HAP-1 (cell line): ENCODE measurements at regions of chr5 and their contacts with region 1.

Region 1: GRCh38 chr5:44774279-44774880 is 34.4 kb upstream of the MRPS30 start:
- DNase-seq: peak; percentile 27 to 67
- H3K4me3 ChIP-seq: no peak overlapping the region
- H3K4me1 ChIP-seq: peaks cover 3% of the 10 kb centered on the region; the same call in 1 of the 2 replicates
- H3K27me3 ChIP-seq: no peaks in the 10 kb centered on the region

Region 2: DNA sequence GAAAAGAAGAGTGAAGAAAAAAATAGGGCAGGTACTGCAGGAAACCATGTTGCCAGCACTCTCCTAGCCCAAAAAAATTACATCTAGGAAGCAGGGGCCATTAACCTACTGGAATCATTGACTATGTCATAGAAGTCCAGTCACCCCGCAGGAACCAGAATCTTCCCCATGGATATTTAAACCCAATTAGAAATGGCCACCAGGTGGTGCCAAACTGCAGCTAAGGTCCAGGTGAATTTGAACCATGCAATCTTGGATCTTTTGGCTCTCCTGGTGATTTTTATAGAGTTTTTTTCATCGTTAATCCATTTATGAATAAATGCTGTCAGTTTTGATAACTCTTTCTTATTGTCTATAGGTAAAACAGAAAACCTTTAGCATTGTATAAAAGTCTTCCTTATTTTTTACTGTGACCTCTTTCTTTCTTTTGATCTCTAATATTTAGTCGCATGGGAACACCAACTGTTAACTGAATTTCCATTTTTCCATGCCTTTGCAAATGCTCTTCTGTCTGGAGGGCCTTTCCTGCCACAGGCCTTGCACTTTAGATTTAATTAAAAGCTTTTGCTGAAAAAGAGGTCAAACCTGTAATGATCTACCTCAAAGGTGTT is 237.6 kb before region 1 on chr5:
- in situ Hi-C with region 1: loop called (anchors 10 kb)
- DNase-seq: peak; percentile 46 to 73
- H3K4me3 ChIP-seq: no peak overlapping the region
- H3K4me1 ChIP-seq: no peaks in the 10 kb centered on the region
- H3K27me3 ChIP-seq: no peaks in the 10 kb centered on the region